Esophagus muscularis mucosa (tissue), 4 donors: ENCODE measurements at regions of chr16 and their contacts with region 1.

Region 1: GRCh38 chr16:31868691-31869167 is 4.9 kb upstream of the ZNF267 start:
- DNase-seq: peak; percentile 96
- H3K4me3 ChIP-seq: peak overlapping the region in 1 of 4 donors; percentile 37
- H3K27ac ChIP-seq: peak overlapping the region in 2 of 4 donors; percentile 5 to 48
- H3K4me1 ChIP-seq: peaks cover 12 to 20% (median 16%) of the 10 kb centered on the region in 4 donors
- H3K27me3 ChIP-seq: no peaks in the 10 kb centered on the region
- CTCF ChIP-seq: peak; percentile 86 to 89 (median 89)
- EP300 ChIP-seq: no peak
- POLR2A ChIP-seq: no peak

Region 2: GRCh38 chr16:31458844-31459721 is 409.6 kb before region 1 on chr16 and contains the start of gene ARMC5:
- intact Hi-C with region 1: loop called (anchors 10 kb)
- DNase-seq: peak; percentile 99
- H3K4me3 ChIP-seq: peak within 1 kb of the TSS; percentile 72 to 96 (median 82)
- H3K27ac ChIP-seq: peak within 1 kb of the TSS; percentile 92 to 99 (median 98)
- H3K4me1 ChIP-seq: peaks cover 47 to 58% (median 52%) of the 10 kb centered on the region in 4 donors
- H3K27me3 ChIP-seq: no peaks in the 10 kb centered on the region
- CTCF ChIP-seq: peak; percentile 61 to 69 (median 62)
- EP300 ChIP-seq: no peak
- POLR2A ChIP-seq: peak; percentile 53
- total RNA-seq, gene ARMC5: 5.4 to 13.4 (median 9.9) TPM